Dorsolateral prefrontal cortex (tissue), 120 donors: ENCODE measurements at regions of chr19 and their contacts with region 1.

Region 1: DNA sequence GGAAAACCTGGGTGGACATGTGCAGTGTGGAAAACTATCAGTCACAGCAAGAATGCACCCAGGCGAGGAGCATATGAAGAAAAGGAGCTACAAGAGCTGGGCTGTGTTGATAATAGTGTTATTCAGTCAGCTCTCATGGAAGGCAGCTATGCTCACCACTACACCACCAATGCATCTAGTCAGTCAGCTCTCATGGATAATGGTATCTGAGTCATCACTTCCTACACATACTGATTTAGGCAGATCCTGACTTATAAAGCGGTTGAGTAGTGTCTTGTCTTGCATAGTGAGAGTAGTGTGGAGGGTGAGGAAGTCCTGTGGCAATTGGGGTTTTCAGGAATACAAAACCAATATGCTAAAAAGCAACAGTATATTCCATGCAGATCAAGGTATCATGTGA is 9.1 kb upstream of the ZNF160 start:
- DNase-seq: no peak
- H3K4me3 ChIP-seq: no peak overlapping the region
- H3K27ac ChIP-seq: peak overlapping the region in 49 of 59 donors; percentile 6 to 99 (median 85)
- H3K27me3 ChIP-seq: no peaks in the 10 kb centered on the region
- CTCF ChIP-seq: no peak

Region 2: DNA sequence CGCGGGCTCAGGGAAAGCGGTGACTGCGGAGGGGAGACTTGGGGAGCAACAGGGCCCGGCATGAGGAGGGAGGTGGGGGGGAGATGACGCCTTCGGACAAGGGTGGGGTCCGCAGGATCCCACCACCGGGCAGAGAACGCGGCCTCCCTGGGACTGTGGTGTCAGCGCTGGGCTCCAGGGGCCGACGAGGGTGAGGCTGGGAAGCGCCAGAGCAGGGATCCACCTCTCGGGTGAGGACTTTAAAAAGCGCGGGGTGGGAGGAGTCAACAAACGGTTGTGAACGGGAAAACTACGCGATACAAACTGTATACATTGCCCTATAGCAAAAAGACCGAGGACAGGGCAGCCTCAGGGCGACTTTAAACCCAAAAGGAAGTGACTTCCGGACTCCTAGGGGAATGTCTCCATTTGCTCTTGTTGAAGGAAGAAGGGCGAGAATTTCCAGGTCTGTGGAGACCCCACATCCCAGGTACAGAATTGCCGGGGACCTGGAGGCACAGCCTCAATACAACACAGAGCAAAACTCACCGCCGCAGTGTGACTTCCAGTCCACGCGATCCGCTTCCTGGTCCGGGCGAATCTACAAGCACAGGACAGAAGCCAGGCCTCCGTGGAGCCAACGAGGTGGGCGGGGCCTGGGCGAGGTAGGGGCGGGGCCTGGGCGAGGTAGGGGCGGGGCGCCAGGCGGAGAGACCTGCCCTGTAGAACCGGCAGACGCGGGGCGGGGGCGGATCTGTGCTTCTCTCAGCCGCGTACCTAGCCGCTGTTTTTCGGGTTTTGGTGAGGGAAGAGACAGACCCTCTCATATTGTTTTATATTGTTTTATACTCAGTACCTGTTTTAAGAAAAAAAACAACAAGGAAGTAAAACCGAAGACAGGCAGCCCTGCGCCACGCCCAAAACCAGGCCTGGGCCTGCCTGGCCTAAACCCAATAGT is 189.2 kb before region 1 on chr19 and contains the start of gene ZNF888:
- intact Hi-C with region 1: no loop called
- DNase-seq: peak; percentile 52 to 91 (median 76)
- H3K4me3 ChIP-seq: peak within 1 kb of the TSS; percentile 47 to 82 (median 69)
- H3K27ac ChIP-seq: peak within 1 kb of the TSS in 50 of 59 donors; percentile 3 to 78 (median 54)
- H3K27me3 ChIP-seq: no peaks in the 10 kb centered on the region
- CTCF ChIP-seq: no peak
- total RNA-seq, gene ZNF888: 0.81 to 5.4 (median 2.0) TPM

Region 3: DNA sequence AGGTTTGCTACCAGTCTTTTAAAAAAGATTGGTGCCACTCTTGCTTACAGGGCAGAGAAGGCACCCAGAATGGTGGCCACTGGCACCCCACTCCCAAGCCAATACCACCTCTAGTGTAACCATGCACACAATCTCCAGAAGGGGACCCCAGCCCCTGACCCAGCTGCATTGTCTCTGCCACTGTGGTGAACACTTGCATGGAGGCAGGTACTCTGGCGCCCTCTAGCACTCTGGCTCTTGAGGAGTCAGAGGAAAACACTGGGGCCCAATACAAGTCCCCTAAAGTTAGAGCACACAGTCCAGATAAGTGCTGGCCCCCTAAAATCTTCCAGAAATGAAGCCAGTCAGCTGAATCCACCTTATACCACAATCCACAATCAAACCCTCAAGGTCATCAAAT is 92.6 kb before region 1 on chr19:
- intact Hi-C with region 1: no loop called
- DNase-seq: no peak
- H3K4me3 ChIP-seq: no peak overlapping the region
- H3K27ac ChIP-seq: no peak overlapping the region
- H3K27me3 ChIP-seq: peaks cover 0 to 10% (median 0%) of the 10 kb centered on the region in 45 donors
- CTCF ChIP-seq: no peak

Region 4: DNA sequence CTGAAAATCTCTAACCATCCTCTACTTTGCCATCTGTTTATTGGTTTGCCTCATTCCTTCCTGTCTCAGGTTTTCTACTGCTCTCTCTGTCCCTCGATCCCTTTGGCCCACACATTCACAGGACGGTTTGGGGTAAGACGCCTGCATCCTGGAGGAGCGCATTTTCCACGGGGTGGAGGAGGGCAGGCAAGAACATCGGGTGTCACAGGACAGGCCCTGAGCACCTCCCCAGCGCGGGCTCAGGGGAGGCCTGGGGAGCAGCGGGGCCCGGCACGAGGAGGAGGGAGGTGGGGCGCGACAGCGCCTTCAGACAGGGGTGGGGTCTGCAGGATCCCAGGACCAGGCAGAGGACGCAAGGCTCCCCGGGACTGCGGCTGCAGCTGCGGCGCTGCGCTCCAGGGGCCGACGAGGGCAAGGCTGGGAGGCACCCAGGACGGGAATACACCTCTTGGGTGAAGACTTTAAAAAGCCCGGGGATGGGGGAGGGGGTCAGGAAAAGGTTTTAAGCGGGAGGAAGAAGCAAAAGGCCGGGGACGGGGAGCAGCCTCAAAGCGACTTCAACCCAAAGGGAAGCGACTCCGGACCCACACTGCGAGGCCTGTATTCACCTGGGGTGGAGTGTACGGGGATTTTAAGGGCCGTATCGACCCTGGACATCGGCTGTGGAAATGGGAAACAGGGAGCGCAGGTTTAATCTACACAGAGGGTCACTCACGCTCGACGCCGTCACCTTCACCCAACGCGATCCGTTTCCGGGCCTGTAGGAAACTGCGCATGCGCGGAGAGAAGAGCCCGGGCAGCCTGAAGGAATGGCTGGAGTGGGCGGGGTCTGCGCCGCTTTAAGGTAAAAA is 20.1 kb after region 1 on chr19 and contains the start of gene ZNF415:
- intact Hi-C with region 1: loop called in 1 of 2 experiments (anchors 2 kb)
- DNase-seq: peak; percentile 80 to 91 (median 86)
- H3K4me3 ChIP-seq: peak within 1 kb of the TSS; percentile 47 to 90 (median 75)
- H3K27ac ChIP-seq: peak within 1 kb of the TSS in 53 of 59 donors; percentile 33 to 93 (median 75)
- H3K27me3 ChIP-seq: no peaks in the 10 kb centered on the region
- CTCF ChIP-seq: peak in 14 of 56 donors; percentile 3 to 42 (median 20)
- total RNA-seq, gene ZNF415: 24.2 to 55.5 (median 36.6) TPM